Posterior cingulate gyrus (tissue), 11 donors: ENCODE measurements at regions of chr17 and their contacts with region 1.

Region 1: DNA sequence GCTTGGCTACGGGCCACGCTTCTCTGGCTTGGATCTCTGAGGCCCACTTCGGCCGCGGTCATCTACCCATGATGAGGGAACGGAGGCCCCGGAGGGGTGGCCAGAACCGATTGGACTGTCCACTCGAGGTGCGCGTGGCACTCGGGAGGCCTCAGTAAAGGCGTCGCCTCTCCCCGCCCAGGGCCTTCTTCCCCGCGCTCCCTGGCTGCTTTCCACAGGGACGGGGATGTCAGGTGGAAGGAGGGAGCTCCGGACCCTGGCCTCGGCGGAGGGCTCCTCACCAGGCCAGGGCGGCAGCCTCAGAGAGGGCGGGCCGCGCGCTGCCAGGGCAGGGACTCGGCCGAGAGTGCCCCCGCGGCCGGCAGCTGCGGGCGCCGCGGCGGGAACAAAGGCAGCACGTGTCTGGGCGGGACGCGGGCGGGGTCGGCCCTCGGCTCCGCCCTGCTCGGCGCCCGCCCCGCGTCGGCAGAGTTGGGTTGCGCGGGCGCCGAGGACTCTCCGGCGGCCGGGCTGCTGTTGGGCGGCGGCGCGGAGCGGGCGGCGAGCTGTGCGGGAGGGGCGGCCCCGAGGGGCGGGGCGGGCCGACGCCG is 587 bp upstream of the CDK5R1 start:
- DNase-seq: peak; percentile 76 to 98 (median 82)

Region 2: DNA sequence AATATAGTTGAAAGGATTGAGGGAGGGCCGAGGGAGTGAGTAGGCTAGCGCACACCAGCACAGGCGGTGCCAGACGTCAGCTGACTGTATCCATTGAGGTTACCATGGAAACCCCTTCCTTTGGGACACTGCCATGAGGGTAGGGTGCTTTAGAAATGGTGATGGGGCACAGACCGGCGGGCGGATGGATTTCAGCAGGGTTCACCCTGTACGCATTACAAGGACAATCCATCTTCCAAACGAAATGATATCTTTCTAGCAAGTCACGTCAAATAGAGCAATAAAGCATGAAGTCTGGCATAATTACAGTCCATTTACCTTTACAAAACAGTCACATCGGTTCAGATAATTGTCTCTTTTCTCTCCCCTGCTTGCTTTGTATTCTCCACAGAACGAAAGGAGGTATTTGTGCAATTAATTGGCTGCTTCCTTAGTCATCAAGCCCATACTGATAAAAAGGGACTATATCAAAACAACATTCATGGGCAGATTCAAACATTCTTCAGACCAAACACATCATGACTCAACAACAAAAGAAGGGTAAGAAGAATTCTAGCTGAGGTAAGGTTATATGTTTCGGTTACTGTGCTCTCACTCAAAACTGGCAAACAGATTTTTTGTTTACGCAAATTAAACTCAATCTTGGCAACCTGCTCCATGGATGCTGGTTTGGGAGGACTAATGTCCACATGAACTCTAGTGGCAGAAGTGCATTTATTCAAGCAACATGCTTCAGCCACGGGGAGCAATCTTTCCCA is 141.2 kb after region 1 on chr17:
- intact Hi-C with region 1: loop called (anchors 5 kb)
- DNase-seq: peak; percentile 46 to 92 (median 69)

Region 3: DNA sequence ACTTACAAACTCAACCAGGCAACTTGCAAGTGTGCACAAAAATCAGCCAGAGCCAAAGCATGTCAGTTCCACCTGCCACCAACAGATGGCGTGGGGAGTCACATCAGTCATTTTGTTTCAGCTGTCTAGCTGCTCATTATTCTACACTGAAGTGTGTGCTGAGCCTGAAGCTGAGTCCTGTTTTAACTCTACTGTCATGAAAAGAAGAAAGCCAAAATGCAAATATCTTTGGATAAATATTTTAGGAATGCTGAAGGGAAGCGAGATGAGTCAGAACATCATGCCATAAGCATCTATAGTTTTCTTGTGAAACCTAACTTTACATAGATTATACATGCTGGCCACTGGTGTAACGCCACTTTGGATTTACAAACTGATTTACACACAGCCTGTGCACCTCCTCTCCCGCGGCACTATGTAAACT is 173.2 kb after region 1 on chr17:
- intact Hi-C with region 1: loop called (anchors 1 kb)
- DNase-seq: peak; percentile 70 to 97 (median 85)

Region 4: DNA sequence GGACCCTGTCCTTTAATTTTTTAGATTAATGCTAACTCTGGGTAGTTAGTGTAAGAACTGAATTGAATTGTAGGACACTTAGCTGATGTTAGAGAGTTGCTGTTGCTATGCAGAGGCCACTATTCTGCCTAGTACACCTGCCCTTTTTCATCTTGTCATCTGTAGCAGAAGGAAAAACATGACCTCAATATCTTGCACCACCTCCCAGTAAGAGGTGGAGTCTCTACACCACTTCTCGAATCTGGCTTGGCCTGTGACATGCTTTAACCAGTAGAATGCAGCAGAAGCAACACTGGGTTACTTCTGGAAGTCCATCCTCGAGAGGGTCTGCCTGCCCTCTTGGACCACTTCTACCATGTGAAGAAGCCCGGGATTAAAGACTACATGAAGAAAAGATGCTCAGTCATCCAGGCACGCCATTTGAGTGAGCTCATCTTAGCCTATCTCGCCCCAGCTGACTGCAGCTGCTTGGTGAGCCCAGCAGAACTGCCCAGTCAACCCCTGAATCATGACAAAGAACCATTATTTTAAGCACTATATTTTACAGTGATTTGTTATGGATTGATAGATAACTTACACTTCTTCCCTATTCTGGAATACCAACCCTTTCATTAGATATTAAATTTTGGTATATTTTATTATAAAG is 237.2 kb after region 1 on chr17:
- intact Hi-C with region 1: no loop called
- DNase-seq: peak in 4 of 10 donors; percentile 35 to 89 (median 44)

Region 5: DNA sequence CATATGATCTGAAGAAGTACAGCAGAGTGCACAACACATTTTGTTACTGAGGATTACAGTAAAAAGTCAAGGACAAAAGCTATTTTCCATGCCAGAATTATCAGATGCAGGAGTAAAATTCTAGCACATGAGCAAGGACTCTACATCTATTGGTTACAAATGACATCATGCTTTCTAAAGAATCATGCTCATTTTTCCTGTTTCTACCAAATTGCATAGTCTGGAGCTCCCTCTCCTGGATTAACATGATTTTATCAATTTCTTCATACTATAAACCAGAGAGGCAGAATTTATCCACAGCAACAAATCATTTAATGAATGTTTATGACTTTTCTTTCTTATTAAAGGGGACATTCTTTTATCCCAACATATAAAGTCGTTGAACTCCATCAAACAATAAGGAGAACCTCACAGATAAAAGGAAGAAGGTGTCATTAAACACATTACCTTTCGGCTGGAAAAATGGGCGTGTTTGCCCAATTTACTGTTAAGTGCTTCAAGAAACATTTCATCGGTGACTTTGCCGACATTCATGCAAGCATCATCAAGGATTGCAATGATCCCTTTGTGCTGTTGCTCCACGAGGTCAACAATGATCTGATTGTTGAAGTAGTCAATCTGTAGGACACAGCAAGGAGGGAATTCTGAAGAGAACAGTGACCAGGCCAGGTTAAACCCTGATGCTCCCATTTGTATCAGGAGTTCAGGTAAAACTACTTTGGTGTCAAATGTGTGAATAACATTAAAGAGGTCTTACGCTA is 269.0 kb after region 1 on chr17:
- intact Hi-C with region 1: loop called (anchors 1 kb)
- DNase-seq: no peak

Region 6: DNA sequence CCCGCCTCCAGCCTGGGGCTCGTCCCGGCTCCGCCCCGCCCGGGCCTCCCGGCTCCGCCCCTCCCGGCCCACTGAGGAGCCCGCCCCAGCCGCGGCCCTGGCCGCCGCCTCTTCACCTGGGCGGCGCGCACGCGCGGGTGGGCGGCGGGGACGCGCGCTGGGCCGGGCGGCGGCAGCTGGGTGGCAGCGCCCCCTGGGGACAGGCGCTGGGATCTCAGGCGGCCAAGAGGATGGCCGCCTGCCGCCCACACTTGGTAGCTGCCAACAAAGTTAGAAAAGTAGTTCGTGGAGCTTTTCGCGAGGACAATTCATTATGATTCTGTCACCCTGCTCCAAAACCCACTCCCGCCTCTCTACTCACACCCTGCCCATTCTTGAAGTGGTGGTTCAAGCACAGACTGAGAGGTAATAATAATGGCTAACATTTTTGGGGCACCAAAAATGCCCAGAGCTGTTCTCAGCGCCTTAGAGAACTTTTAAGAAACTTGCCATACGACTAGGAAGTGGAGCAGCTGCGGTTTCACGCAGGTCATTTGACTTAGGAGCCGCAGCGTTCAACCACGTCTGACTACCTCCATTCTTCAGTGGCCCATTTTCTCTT is 391.1 kb after region 1 on chr17:
- intact Hi-C with region 1: loop called (anchors 2 kb)
- DNase-seq: peak; percentile 73 to 98 (median 82)